PC-9 (cell line): ENCODE measurements at regions of chr2 and their contacts with region 1.

Region 1: DNA sequence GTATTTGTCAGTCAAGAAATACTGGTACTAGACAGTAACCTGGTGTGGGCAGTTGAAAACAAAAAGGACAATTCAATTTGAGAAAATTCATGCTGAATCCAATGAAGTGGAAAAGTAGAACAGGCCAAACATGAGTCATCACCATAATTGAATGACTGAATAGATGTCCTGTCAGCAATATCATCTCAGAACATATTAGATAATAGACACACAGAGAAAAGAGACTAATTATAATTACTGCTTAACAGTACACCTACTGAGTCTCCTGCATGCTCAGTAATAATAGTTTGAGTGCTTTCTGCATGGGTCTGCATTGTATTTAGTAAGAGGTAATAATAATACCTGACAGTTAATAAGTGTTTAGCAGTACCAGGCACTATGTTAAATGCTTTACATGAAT is 138.6 kb upstream of the ZC3H15 start:
- DNase-seq: no peak
- H3K4me3 ChIP-seq: no peak overlapping the region
- H3K27ac ChIP-seq: no peak overlapping the region
- H3K4me1 ChIP-seq: no peaks in the 10 kb centered on the region
- H3K27me3 ChIP-seq: no peaks in the 10 kb centered on the region
- CTCF ChIP-seq: no peak

Region 2: GRCh38 chr2:186327251-186327868 is 20.1 kb before region 1 on chr2:
- CTCF ChIA-PET with region 1: no interaction called
- POLR2A ChIA-PET with region 1: interaction called, 20 read pairs
- intact Hi-C with region 1: no loop called
- DNase-seq: no peak
- H3K4me3 ChIP-seq: no peak overlapping the region
- H3K27ac ChIP-seq: no peak overlapping the region
- H3K4me1 ChIP-seq: peaks cover 12% of the 10 kb centered on the region
- H3K27me3 ChIP-seq: no peaks in the 10 kb centered on the region
- CTCF ChIP-seq: no peak